AG04450 (cell line): ENCODE measurements at regions of chr11 and their contacts with region 1.

Region 1: DNA sequence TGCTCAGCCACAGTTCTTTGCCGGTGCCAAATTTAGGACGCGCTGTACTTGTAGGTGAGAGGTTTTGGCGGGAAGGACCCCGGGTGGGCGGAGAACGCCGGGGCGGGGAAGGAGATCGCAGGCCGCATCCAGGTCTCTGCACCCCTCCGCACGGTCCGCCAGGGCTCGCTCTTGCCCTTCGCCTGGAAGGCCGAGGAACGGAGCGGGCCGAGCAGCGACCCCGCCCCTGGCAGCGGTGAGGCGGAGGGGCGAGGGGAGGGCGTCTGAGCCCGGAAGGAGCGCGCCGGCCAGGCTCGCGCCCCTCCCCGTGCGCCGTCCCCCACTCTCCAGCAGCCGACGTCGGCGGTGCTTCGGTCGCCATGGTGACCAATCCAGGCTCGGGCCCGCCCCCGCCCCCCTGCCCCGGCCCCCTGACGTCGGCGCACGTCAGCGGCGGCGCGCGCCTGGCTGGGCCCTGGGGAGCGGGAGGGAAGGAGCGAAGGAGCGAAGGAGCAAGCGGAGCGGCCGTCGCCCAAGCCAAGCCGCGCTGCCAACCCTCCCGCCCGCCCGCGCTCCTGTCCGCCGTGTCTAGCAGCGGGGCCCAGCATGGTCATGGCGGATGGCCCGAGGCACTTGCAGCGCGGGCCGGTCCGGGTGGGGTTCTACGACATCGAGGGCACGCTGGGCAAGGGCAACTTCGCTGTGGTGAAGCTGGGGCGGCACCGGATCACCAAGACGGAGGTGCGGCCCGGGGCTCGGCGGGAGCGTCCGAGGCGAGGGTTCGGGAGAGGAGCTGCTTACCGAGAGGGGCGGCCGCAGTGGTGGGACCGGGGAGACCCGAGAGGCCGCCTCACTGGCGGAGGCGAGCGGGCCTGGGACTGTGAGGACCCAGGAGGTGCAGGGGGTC is at the start of gene SIK2:
- DNase-seq: peak; percentile 91
- H3K4me3 ChIP-seq: peak within 1 kb of the TSS; percentile 81
- H3K27ac ChIP-seq: peak within 1 kb of the TSS; percentile 85
- H3K27me3 ChIP-seq: no peaks in the 10 kb centered on the region
- CTCF ChIP-seq: peak; percentile 86
- polyA plus RNA-seq, gene SIK2: 23.3 and 23.4 TPM in 2 replicates

Region 2: GRCh38 chr11:111565114-111565720 is 37.0 kb before region 1 on chr11:
- CTCF ChIA-PET with region 1: interaction called, 10 read pairs
- POLR2A ChIA-PET with region 1: interaction called, 5 read pairs
- DNase-seq: no peak
- H3K4me3 ChIP-seq: no peak overlapping the region
- H3K27ac ChIP-seq: no peak overlapping the region
- H3K27me3 ChIP-seq: no peaks in the 10 kb centered on the region
- CTCF ChIP-seq: peak; percentile 88

Region 3: DNA sequence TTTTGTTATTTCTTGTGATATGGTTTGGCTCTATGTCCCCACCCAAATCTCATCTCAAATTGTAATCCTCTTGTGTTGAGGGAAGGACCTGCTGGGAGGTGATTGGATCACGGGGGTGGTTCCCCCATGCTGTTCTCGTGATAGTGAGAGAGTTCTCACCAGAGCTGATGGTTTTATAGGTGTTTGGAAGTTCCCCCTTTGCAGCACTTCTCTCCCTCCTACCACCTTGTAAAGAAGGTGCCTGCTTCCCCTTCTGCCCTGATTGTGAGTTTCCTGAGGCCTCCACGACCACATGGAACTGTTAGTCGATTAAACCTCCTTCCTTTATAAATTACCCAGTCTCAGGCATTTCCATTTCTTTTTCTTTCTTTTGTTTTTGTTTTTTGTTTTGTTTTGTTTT is 24.4 kb before region 1 on chr11:
- CTCF ChIA-PET with region 1: no interaction called
- POLR2A ChIA-PET with region 1: no interaction called
- DNase-seq: no peak
- H3K4me3 ChIP-seq: no peak overlapping the region
- H3K27ac ChIP-seq: no peak overlapping the region
- H3K27me3 ChIP-seq: no peaks in the 10 kb centered on the region
- CTCF ChIP-seq: no peak

Region 4: DNA sequence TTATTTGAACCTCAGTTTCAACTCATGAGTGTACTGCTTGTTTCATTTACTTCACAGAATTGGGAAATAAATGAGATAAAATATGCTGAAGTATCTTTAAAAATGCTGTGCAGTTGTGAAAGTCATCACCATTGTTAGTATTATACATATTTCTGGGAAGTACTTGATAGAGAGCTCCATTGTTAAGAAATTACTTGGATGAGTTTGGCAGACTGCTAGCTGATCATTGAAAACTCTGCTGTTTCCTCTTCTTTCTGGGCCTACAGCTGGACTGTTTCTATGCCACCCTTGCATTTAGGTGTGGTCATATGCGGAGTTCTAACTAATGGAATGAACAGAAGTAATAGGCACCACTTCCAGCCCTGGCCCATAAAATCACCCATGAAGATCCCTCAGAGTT is 10.0 kb after region 1 on chr11:
- CTCF ChIA-PET with region 1: interaction called, 24 read pairs
- POLR2A ChIA-PET with region 1: no interaction called
- DNase-seq: peak; percentile 29
- H3K4me3 ChIP-seq: no peak overlapping the region
- H3K27ac ChIP-seq: no peak overlapping the region
- H3K27me3 ChIP-seq: no peaks in the 10 kb centered on the region
- CTCF ChIP-seq: no peak

Region 5: DNA sequence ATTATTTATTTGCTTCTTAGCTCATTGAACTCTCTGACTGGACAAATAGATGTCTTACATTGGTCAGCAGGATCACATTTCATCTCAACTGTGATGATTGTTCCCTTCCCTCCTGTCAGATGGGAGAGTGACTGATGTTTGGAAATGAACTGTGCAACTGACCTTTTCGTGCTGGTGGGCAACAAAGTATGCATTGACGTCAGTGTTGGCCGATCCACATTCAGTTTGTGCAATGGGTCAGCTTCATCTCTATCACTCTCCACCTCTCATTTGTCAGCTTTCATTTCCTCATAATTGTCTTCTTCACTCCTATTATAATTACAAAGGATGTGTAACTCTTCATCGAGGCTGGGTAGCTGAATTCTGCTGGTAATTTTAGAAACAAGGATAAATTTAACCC is 92.6 kb after region 1 on chr11:
- CTCF ChIA-PET with region 1: interaction called, 19 read pairs
- POLR2A ChIA-PET with region 1: interaction called, 3 read pairs
- DNase-seq: peak; percentile 92
- H3K4me3 ChIP-seq: no peak overlapping the region
- H3K27ac ChIP-seq: no peak overlapping the region
- H3K27me3 ChIP-seq: no peaks in the 10 kb centered on the region
- CTCF ChIP-seq: no peak

Region 6: DNA sequence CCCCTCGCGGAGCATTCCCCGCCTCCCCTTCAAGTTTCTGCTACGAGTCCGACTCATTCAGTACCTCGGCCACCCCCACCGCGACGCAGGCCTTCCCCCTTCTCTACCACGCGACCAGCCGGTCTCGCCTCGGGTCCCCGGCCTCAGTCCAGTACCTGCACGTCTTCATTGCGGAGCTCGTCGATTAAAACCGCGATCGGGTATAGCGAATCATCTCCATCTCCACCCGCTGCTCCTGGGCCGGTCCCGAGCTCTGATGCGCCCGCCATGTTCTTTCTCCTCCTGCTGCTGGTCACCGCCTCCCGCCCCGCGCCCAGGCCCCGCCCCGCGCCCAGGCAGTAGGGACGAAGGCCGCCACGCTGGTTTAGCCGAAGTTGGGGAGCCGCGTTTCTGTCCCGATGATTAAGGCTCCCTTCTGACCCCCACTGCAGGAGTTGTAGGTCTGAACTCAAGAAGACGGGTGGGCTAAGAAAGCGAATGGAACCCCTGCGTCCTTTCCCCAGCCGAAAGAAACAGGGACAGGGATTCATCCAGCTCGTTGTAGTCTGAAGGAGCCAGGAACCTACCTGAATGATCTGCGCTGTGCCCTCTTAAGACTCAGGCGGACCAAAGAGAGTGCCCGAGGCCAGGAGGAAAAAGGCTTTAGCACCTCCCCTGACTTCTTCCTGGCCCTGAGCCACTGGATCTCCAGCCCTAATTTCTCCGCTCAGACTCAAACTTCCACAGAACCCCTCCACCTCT is 164.0 kb after region 1 on chr11 and contains the start of gene PPP2R1B:
- CTCF ChIA-PET with region 1: interaction called, 16 read pairs
- POLR2A ChIA-PET with region 1: interaction called, 3 read pairs
- DNase-seq: no peak
- H3K4me3 ChIP-seq: peak within 1 kb of the TSS; percentile 94
- H3K27ac ChIP-seq: peak within 1 kb of the TSS; percentile 78
- H3K27me3 ChIP-seq: no peaks in the 10 kb centered on the region
- CTCF ChIP-seq: no peak
- polyA plus RNA-seq, gene PPP2R1B: 40.3 and 44.9 TPM in 2 replicates

Region 7: DNA sequence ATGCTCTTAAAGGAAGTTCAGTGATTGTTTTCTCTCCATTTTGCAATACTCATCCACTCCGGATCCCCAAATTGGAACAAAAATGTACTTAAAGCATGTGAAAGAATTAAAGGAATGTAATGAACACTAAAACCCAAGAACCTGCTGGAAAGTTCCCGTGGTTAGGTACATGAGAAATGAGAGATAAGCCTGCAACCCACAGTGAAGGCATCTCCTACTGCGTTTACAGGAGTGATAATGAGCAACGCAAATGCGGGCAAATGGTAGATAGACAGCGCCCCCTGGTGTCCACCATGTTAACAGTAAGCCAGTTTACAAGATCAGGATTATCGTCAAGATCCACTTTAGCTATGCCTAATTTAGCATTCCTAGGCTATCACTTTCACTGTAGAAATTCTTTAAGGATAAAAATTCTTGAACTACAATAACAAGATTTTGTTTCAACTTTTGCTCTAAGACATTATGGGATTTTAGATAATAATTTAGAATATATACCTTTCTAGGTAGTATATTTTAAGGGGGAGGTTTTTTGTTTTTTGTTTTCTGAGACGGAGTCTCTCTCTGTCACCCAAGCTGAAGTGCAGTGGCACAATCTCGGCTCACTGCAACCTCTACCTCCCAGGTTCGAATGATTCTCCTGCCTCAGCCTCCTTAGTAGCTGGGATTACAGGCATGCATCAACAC is 239.3 kb after region 1 on chr11:
- CTCF ChIA-PET with region 1: interaction called, 15 read pairs
- POLR2A ChIA-PET with region 1: no interaction called
- DNase-seq: peak; percentile 72
- H3K4me3 ChIP-seq: no peak overlapping the region
- H3K27ac ChIP-seq: no peak overlapping the region
- H3K27me3 ChIP-seq: no peaks in the 10 kb centered on the region
- CTCF ChIP-seq: peak; percentile 89